CD8-positive, alpha-beta T cell (primary cell): ENCODE measurements at regions of chr3 and their contacts with region 1.

Region 1: GRCh38 chr3:102206511-102207031 is 228.2 kb upstream of the ZPLD1 start:
- DNase-seq: no peak
- ATAC-seq: no peak
- H3K4me3 ChIP-seq: no peak overlapping the region
- H3K4me3 Mint-ChIP-seq: no peak overlapping the region
- H3K27ac ChIP-seq: no peak overlapping the region
- H3K27ac Mint-ChIP-seq: no peak overlapping the region
- H3K4me1 ChIP-seq: no peaks in the 10 kb centered on the region
- H3K4me1 Mint-ChIP-seq: no peaks in the 10 kb centered on the region
- H3K27me3 ChIP-seq: no peaks in the 10 kb centered on the region
- H3K27me3 Mint-ChIP-seq: no peaks in the 10 kb centered on the region
- CTCF ChIP-seq: no peak

Region 2: DNA sequence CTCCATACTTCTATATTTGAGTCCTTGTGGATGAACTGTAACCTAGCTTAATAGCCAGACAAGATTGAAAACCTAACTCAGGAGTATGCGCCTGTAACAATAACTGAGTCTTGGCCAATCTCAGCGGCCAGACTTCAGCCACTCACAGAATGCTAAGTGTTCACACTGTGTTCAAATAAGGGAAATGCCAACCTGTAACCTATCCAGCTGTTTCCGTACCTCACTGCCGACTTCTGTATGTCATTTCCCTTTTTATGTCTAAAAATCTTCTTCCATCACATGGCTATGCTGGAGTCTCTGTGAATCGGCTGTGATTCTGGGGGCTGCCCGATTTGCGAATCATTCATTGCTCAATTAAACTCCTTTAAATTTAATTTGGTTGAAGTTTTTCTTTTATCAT is 188.0 kb before region 1 on chr3:
- CTCF ChIA-PET with region 1: no interaction called
- POLR2A ChIA-PET with region 1: no interaction called
- intact Hi-C with region 1: loop called in 1 of 2 experiments (anchors 10 kb)
- DNase-seq: peak in 1 of 9 experiments; percentile 31
- ATAC-seq: peak; percentile 20
- H3K4me3 ChIP-seq: no peak overlapping the region
- H3K4me3 Mint-ChIP-seq: no peak overlapping the region
- H3K27ac ChIP-seq: no peak overlapping the region
- H3K27ac Mint-ChIP-seq: no peak overlapping the region
- H3K4me1 ChIP-seq: no peaks in the 10 kb centered on the region
- H3K4me1 Mint-ChIP-seq: peaks cover 22% of the 10 kb centered on the region
- H3K27me3 ChIP-seq: no peaks in the 10 kb centered on the region
- H3K27me3 Mint-ChIP-seq: no peaks in the 10 kb centered on the region
- CTCF ChIP-seq: no peak

Region 3: GRCh38 chr3:102258666-102259227 is 52.2 kb after region 1 on chr3:
- CTCF ChIA-PET with region 1: no interaction called
- POLR2A ChIA-PET with region 1: no interaction called
- intact Hi-C with region 1: no loop called
- DNase-seq: no peak
- ATAC-seq: no peak
- H3K4me3 ChIP-seq: no peak overlapping the region
- H3K4me3 Mint-ChIP-seq: no peak overlapping the region
- H3K27ac ChIP-seq: no peak overlapping the region
- H3K27ac Mint-ChIP-seq: no peak overlapping the region
- H3K4me1 ChIP-seq: no peaks in the 10 kb centered on the region
- H3K4me1 Mint-ChIP-seq: no peaks in the 10 kb centered on the region
- H3K27me3 ChIP-seq: no peaks in the 10 kb centered on the region
- H3K27me3 Mint-ChIP-seq: peaks cover 16% of the 10 kb centered on the region
- CTCF ChIP-seq: no peak

Region 4: DNA sequence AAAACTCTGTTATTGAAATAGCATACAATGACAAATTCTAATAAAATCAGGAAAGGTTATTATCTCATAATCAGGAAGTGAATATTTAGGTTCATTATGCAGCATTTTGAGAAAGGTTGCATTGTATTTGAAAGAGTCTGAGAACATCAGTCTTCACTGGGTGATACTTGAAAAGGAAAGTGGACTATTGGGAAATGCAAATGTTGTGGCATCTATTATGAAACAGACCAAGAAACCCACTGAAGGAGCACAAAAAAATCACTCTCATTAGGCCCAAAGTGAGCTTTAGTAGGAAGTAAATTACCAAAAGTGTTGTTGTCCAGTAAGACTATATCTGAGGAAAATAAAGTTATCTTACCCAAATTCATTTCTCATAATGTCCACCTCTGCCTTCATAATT is 319.1 kb after region 1 on chr3:
- CTCF ChIA-PET with region 1: no interaction called
- POLR2A ChIA-PET with region 1: no interaction called
- intact Hi-C with region 1: no loop called
- DNase-seq: no peak
- ATAC-seq: no peak
- H3K4me3 ChIP-seq: no peak overlapping the region
- H3K4me3 Mint-ChIP-seq: no peak overlapping the region
- H3K27ac ChIP-seq: no peak overlapping the region
- H3K27ac Mint-ChIP-seq: no peak overlapping the region
- H3K4me1 ChIP-seq: no peaks in the 10 kb centered on the region
- H3K4me1 Mint-ChIP-seq: no peaks in the 10 kb centered on the region
- H3K27me3 ChIP-seq: no peaks in the 10 kb centered on the region
- H3K27me3 Mint-ChIP-seq: peaks cover 5% of the 10 kb centered on the region
- CTCF ChIP-seq: no peak